ENCODE measurements at regions of chr1 and their contacts with region 1.

Region 1: GRCh38 chr1:3237994-3238702 is 169.1 kb downstream of the PRDM16 start:
- DNase-seq: peak; percentile 80
- ATAC-seq: peak; percentile 86
- H3K4me3 ChIP-seq: peak overlapping the region; percentile 22 to 51 (median 42); a peak in 4 of 6 replicates
- H3K27ac ChIP-seq: peak overlapping the region; percentile 91
- H3K4me1 ChIP-seq: peaks cover 59% of the 10 kb centered on the region
- H3K27me3 ChIP-seq: no peaks in the 10 kb centered on the region
- CTCF ChIP-seq: no peak
- EP300 ChIP-seq: no peak
- POLR2A ChIP-seq: no peak; a peak in 1 of 4 replicates
- RAD21 ChIP-seq: no peak

Region 2: GRCh38 chr1:3192825-3193224 is 45.3 kb before region 1 on chr1:
- CTCF ChIA-PET with region 1: no interaction called
- POLR2A ChIA-PET with region 1: no interaction called
- in situ Hi-C with region 1: no loop called
- intact Hi-C with region 1: no loop called
- DNase-seq: peak; percentile 7
- ATAC-seq: peak; percentile 15; the same call in 2 of the 3 replicates
- H3K4me3 ChIP-seq: peak overlapping the region in 1 of 3 experiments; percentile 49; a peak in 1 of 6 replicates
- H3K27ac ChIP-seq: peak overlapping the region; percentile 24
- H3K4me1 ChIP-seq: peaks cover 34% of the 10 kb centered on the region
- H3K27me3 ChIP-seq: no peaks in the 10 kb centered on the region; a peak in 2 of 5 replicates
- CTCF ChIP-seq: no peak
- EP300 ChIP-seq: no peak
- POLR2A ChIP-seq: no peak
- RAD21 ChIP-seq: no peak

Region 3: GRCh38 chr1:3249631-3250501 is 11.7 kb after region 1 on chr1:
- CTCF ChIA-PET with region 1: no interaction called
- POLR2A ChIA-PET with region 1: interaction called, 43 read pairs
- in situ Hi-C with region 1: no loop called
- intact Hi-C with region 1: no loop called
- DNase-seq: peak; percentile 39
- ATAC-seq: peak; percentile 69
- H3K4me3 ChIP-seq: peak overlapping the region; percentile 24 to 61 (median 43); a peak in 5 of 6 replicates
- H3K27ac ChIP-seq: peak overlapping the region; percentile 83
- H3K4me1 ChIP-seq: peaks cover 62% of the 10 kb centered on the region
- H3K27me3 ChIP-seq: no peaks in the 10 kb centered on the region
- CTCF ChIP-seq: no peak
- EP300 ChIP-seq: peak in 1 of 2 experiments; percentile 79; a peak in 1 of 4 replicates
- POLR2A ChIP-seq: no peak; a peak in 1 of 4 replicates
- RAD21 ChIP-seq: no peak

Measured in HepG2 (cell line).